Dorsolateral prefrontal cortex (tissue), 120 donors: ENCODE measurements at regions of chr22 and their contacts with region 1.

Region 1: GRCh38 chr22:32796865-32797573 is 4.5 kb upstream of the TIMP3 start:
- DNase-seq: peak; percentile 19 to 83 (median 77)
- H3K4me3 ChIP-seq: peak overlapping the region in 8 of 59 donors; percentile 2 to 46 (median 21)
- H3K27ac ChIP-seq: peak overlapping the region in 30 of 59 donors; percentile 9 to 90 (median 60)
- H3K27me3 ChIP-seq: peaks cover 0 to 4% (median 0%) of the 10 kb centered on the region in 45 donors
- CTCF ChIP-seq: peak; percentile 52 to 96 (median 87)

Region 2: GRCh38 chr22:32411829-32412592 is 385.0 kb before region 1 on chr22 and contains the start of gene RTCB:
- intact Hi-C with region 1: loop called in 1 of 2 experiments (anchors 5 kb)
- DNase-seq: peak; percentile 81 to 94 (median 88)
- H3K4me3 ChIP-seq: peak within 1 kb of the TSS; percentile 63 to 100 (median 92)
- H3K27ac ChIP-seq: peak within 1 kb of the TSS in 51 of 59 donors; percentile 16 to 86 (median 56)
- H3K27me3 ChIP-seq: no peaks in the 10 kb centered on the region
- CTCF ChIP-seq: peak in 48 of 56 donors; percentile 8 to 66 (median 36)
- total RNA-seq, gene RTCB: 34.6 to 76.6 (median 58.4) TPM

Region 3: DNA sequence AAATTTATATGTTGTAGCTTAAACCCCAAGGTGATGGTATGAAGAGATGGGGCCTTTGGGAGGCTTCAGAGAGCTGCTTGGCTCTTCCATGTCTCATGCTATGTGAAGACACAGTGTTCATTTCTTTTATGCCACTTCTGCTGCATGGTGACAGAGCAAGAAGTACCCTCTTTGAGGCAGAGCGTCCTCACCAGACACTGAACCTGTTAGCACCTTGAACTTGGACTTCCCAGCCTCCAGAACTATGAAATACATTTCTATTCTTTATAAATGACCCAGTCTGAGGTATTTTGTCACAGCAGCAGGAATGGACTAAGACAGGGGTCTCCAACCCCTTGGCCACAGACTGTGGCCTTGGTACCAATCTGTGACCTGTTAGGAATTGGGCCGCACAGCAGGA is 142.0 kb before region 1 on chr22:
- intact Hi-C with region 1: loop called in 1 of 2 experiments (anchors 5 kb)
- DNase-seq: no peak
- H3K4me3 ChIP-seq: no peak overlapping the region
- H3K27ac ChIP-seq: no peak overlapping the region
- H3K27me3 ChIP-seq: no peaks in the 10 kb centered on the region
- CTCF ChIP-seq: no peak

Region 4: DNA sequence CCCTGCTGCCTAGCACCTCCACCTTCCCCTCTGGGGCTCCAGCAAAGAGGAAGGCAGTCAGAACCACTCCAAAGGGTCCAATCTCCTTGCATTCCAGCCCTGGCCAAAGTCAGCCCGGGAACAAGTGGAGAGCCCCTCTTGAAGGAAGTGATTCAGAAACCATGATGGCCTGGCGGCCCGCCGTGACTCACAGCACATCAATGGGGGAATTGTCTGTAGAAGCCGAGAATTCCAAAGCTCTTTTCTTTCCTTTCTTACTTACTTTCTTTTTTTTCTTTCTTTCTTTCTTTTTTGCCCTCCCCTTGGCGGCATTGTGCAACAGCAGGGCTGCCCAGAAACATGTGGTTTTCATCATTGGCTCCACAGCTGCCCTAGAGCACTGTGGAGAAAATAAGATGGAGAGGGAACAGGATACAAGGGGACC is 135.8 kb before region 1 on chr22:
- intact Hi-C with region 1: loop called (anchors 1 to 5 kb)
- DNase-seq: peak in 1 of 10 donors; percentile 41
- H3K4me3 ChIP-seq: no peak overlapping the region
- H3K27ac ChIP-seq: peak overlapping the region in 1 of 59 donors; percentile 18
- H3K27me3 ChIP-seq: no peaks in the 10 kb centered on the region
- CTCF ChIP-seq: no peak

Region 5: DNA sequence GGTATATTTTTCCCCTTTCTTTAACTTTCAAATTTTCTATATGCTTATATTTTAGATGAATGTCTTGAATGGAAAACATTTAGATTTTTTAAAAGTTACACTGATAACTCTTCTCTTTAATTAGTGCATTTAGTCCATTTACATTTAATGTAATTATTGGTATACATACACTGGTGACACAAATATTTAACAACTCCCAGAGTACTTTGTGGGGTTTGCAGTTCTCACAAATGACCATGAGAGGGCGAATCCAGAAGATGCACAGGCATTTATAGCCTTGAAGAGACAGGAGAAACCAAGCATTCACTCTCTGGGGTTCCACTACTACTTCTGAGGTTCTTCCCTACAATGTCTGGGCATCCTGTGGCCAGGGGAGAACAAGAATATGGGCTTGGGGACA is 129.6 kb after region 1 on chr22:
- intact Hi-C with region 1: no loop called
- DNase-seq: no peak
- H3K4me3 ChIP-seq: no peak overlapping the region
- H3K27ac ChIP-seq: no peak overlapping the region
- H3K27me3 ChIP-seq: no peaks in the 10 kb centered on the region
- CTCF ChIP-seq: peak in 55 of 56 donors; percentile 17 to 62 (median 47)

Region 6: DNA sequence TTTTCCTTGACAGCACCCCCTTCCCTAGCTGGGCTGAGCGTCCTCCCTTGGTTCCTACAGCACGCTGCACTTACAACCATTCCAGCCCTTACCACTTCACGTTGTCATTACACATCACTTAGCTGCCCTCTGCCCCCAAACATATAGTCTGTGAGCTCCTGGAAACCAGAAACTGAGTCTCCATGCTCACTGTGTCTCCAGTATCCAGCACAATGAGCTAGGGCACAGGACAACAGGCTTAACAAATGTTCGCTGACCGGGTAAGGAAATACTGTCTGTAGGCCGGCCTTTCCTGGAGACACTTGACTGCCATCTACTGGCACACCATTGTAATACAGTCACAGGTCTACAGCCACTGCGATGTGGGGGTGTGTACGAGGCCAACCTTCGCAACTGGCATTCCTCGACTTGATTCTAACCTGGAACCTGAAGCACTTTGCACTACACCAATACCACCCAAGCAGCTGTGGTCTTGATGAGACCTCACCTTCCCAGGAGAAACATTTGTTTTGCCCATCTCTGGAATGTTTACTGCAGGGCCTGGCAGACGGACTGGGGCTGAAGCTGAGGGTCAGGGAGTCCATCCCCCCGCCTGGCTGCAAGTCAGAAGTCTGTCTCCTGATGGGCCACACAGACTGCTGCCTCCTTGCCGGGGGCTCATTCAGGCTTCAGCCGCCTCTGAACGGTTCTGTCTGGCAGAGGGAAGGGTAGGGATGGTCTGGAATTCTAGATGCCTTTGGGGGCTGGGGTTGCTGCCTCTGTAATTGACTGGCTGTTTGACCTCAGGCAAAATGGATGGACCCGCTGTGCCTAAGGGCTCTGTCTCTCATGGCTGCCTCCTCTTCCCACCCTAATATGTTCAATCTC is 189.1 kb after region 1 on chr22:
- intact Hi-C with region 1: loop called in 1 of 2 experiments (anchors 5 kb)
- DNase-seq: peak in 9 of 10 donors; percentile 40 to 82 (median 64)
- H3K4me3 ChIP-seq: no peak overlapping the region
- H3K27ac ChIP-seq: peak overlapping the region in 35 of 59 donors; percentile 3 to 77 (median 51)
- H3K27me3 ChIP-seq: no peaks in the 10 kb centered on the region
- CTCF ChIP-seq: peak; percentile 62 to 96 (median 87)